ENCODE measurements at regions of chr16 and their contacts with region 1.

Region 1: GRCh38 chr16:81623363-81624102 is 155.6 kb upstream of the PLCG2 start:
- DNase-seq: peak; percentile 53
- ATAC-seq: peak; percentile 70
- H3K4me3 ChIP-seq: no peak overlapping the region
- H3K27ac ChIP-seq: no peak overlapping the region
- H3K4me1 ChIP-seq: peaks cover 5 to 35% of the 10 kb centered on the region in 2 experiments; a peak in 3 of 4 replicates
- H3K27me3 ChIP-seq: no peaks in the 10 kb centered on the region
- CTCF ChIP-seq: peak; percentile 72 to 95 (median 93)
- POLR2A ChIP-seq: no peak
- RAD21 ChIP-seq: peak; percentile 99

Region 2: DNA sequence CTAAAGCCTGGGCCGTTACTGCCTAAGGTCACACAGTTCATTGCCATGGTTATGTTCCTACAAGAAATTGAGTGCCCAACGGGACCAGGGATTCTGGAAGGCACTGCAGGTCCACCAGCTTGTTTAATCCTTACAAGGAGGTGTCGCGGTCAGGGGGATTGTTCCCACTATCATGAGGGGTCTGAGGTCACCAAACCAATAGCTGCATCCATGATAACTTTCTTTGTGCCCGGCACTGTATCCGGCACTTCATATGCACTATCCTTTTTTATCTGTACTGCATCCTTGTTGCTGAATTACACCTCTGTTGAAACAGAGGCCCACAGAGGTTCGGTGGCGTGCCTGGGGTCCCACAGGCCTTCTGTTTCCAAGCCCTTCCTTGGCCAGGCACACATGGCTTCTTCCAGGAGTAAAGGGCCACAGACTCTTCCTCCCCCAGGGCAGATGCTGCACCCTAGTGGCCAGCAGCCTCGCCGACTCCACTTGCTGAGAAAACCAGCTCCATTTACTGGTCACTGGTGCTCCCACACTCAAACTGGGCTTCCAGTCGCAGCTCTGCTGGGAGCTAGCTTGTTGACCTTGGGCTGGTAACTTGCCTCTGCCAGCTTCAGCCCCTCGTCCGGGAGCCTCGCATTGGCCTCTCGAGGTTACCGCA is 73.6 kb after region 1 on chr16:
- CTCF ChIA-PET with region 1: interaction called, 28 read pairs
- POLR2A ChIA-PET with region 1: no interaction called
- RAD21 ChIA-PET with region 1: interaction called in 1 of 2 experiments, 3 read pairs
- intact Hi-C with region 1: loop called (anchors 1 kb)
- DNase-seq: peak; percentile 51
- ATAC-seq: peak; percentile 84
- H3K4me3 ChIP-seq: no peak overlapping the region
- H3K27ac ChIP-seq: no peak overlapping the region
- H3K4me1 ChIP-seq: peaks cover 0 to 20% of the 10 kb centered on the region in 2 experiments; a peak in 2 of 4 replicates
- H3K27me3 ChIP-seq: no peaks in the 10 kb centered on the region
- CTCF ChIP-seq: peak; percentile 89 to 96 (median 96)
- POLR2A ChIP-seq: no peak
- RAD21 ChIP-seq: peak; percentile 98